Mammary epithelial cell (primary cell): ENCODE measurements at regions of chrX and their contacts with region 1.

Region 1: GRCh38 chrX:148928811-148929210 is 428.4 kb downstream of the AFF2 start:
- DNase-seq: peak; percentile 76
- H3K4me3 ChIP-seq: no peak overlapping the region
- H3K27ac ChIP-seq: peak overlapping the region; percentile 56
- H3K4me1 ChIP-seq: peaks cover 28% of the 10 kb centered on the region
- H3K27me3 ChIP-seq: no peaks in the 10 kb centered on the region
- CTCF ChIP-seq: no peak

Region 2: GRCh38 chrX:148871422-148872160 is 57.2 kb before region 1 on chrX:
- CTCF ChIA-PET with region 1: no interaction called
- dilution Hi-C with region 1: no loop called
- in situ Hi-C with region 1: no loop called
- intact Hi-C with region 1: loop called (anchors 5 kb)
- DNase-seq: peak; percentile 94
- H3K4me3 ChIP-seq: no peak overlapping the region
- H3K27ac ChIP-seq: peak overlapping the region; percentile 86
- H3K4me1 ChIP-seq: peaks cover 55% of the 10 kb centered on the region
- H3K27me3 ChIP-seq: no peaks in the 10 kb centered on the region
- CTCF ChIP-seq: no peak

Region 3: DNA sequence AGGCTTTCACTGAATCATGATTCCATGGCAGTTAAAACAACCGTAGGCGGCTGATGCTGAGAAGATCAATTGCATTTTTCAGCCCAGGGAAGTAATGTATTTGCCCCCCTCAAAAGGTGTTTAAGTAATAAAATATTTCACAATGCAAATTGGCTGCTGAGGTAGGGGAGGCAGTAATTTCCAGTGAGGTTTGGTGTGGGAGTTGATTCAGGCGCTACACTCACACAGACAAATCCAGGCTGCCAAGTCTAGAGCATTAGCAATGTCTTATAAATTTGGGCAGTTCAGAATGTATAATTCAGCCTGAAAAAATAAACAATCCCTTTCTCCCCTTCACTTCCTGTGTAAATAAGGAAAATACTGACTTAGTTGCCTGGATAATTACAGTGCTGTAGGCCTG is 114.6 kb after region 1 on chrX:
- CTCF ChIA-PET with region 1: no interaction called
- dilution Hi-C with region 1: no loop called
- in situ Hi-C with region 1: no loop called
- intact Hi-C with region 1: no loop called
- DNase-seq: no peak
- H3K4me3 ChIP-seq: no peak overlapping the region
- H3K27ac ChIP-seq: no peak overlapping the region
- H3K4me1 ChIP-seq: peaks cover 5% of the 10 kb centered on the region
- H3K27me3 ChIP-seq: no peaks in the 10 kb centered on the region
- CTCF ChIP-seq: no peak

Region 4: DNA sequence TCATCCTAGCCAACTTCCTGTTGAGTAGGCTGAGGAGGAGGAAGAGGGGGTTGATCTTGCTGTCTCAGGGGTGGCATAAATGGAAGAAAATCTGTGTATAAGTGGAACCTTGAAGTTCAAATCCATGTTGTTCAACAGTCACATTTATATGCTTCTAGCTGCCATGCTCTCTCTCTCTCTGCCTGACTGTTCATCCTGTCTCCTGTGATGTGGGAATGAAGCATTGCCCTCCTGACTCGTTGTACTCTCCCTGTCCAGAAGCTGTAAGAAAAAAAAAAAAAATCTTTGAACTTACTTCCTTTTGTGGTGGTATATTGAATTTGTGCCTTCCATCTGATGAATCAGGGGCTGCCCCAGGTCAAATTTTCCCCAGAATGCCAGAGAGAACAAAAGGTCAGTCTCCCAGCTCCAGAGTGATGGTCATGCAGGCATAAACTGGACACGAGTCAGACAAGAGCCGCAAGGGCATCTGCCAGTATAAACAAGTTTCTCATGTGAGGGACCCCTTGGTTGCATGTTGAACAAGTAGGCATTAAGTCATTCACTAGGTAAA is 319.3 kb after region 1 on chrX:
- CTCF ChIA-PET with region 1: no interaction called
- dilution Hi-C with region 1: no loop called
- in situ Hi-C with region 1: no loop called
- intact Hi-C with region 1: no loop called
- DNase-seq: peak; percentile 16
- H3K4me3 ChIP-seq: no peak overlapping the region
- H3K27ac ChIP-seq: no peak overlapping the region
- H3K4me1 ChIP-seq: no peaks in the 10 kb centered on the region
- H3K27me3 ChIP-seq: no peaks in the 10 kb centered on the region
- CTCF ChIP-seq: no peak